ENCODE measurements at regions of chr3 and their contacts with region 1.

Region 1: GRCh38 chr3:100590114-100590839 is 19.1 kb upstream of the ADGRG7 start:
- DNase-seq: peak; percentile 76
- ATAC-seq: peak; percentile 94
- H3K4me3 ChIP-seq: no peak overlapping the region; the same call in 1 of the 2 replicates
- H3K27ac ChIP-seq: no peak overlapping the region
- H3K4me1 ChIP-seq: no peaks in the 10 kb centered on the region
- H3K27me3 ChIP-seq: no peaks in the 10 kb centered on the region
- CTCF ChIP-seq: peak; percentile 89
- POLR2A ChIP-seq: no peak; the same call in 1 of the 2 replicates
- RAD21 ChIP-seq: peak; percentile 93

Region 2: DNA sequence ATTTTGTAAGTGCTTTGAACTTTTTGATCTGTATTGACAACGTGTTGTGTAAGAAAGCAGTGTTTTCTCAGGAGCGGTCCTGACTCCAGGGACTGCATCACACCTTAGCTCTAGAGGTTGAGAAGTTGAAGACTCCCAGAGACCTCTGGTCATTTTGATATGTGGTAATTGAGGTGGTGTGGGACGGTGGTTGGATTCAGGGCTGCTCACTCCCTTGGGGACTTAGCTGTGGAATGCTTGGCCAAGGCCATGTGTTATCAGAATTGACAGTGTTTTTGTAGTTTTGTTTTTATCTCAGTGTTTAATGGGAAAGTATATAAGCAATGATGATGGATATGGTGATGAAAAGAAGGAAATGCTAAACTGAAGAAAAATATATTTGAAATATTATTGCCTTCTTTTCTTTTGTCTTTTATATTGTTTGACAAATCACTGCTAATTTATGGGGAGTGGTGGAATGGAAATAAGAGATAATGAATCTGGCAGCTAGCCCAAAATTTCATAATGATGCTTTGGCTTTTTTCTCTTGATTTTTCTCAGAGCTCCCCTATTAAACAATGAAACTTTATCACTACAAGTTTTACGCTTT is 756.6 kb before region 1 on chr3:
- CTCF ChIA-PET with region 1: no interaction called
- POLR2A ChIA-PET with region 1: no interaction called
- dilution Hi-C with region 1: no loop called
- in situ Hi-C with region 1: loop called (anchors 10 kb)
- intact Hi-C with region 1: loop called (anchors 2 kb)
- DNase-seq: no peak
- ATAC-seq: no peak
- H3K4me3 ChIP-seq: no peak overlapping the region
- H3K27ac ChIP-seq: no peak overlapping the region
- H3K4me1 ChIP-seq: peaks cover 2% of the 10 kb centered on the region; the same call in 1 of the 2 replicates
- H3K27me3 ChIP-seq: no peaks in the 10 kb centered on the region
- CTCF ChIP-seq: no peak
- POLR2A ChIP-seq: no peak
- RAD21 ChIP-seq: no peak

Region 3: GRCh38 chr3:100316641-100317069 is 273.6 kb before region 1 on chr3:
- CTCF ChIA-PET with region 1: no interaction called
- POLR2A ChIA-PET with region 1: no interaction called
- dilution Hi-C with region 1: no loop called
- in situ Hi-C with region 1: loop called (anchors 10 kb)
- intact Hi-C with region 1: loop called (anchors 1 kb)
- DNase-seq: peak; percentile 68
- ATAC-seq: peak; percentile 94
- H3K4me3 ChIP-seq: no peak overlapping the region
- H3K27ac ChIP-seq: peak overlapping the region; percentile 45; the same call in 1 of the 2 replicates
- H3K4me1 ChIP-seq: 0 out of 2 replicates have a peak, but pooled peaks cover 2% of the 10 kb centered on the region
- H3K27me3 ChIP-seq: no peaks in the 10 kb centered on the region
- CTCF ChIP-seq: peak; percentile 70
- POLR2A ChIP-seq: no peak
- RAD21 ChIP-seq: peak; percentile 74

Region 4: GRCh38 chr3:100463002-100463401 is 127.3 kb before region 1 on chr3:
- CTCF ChIA-PET with region 1: interaction called, 23 read pairs
- POLR2A ChIA-PET with region 1: no interaction called
- dilution Hi-C with region 1: no loop called
- in situ Hi-C with region 1: loop called (anchors 5 kb)
- intact Hi-C with region 1: loop called (anchors 1 kb)
- DNase-seq: peak; percentile 78
- ATAC-seq: peak; percentile 94
- H3K4me3 ChIP-seq: no peak overlapping the region
- H3K27ac ChIP-seq: no peak overlapping the region
- H3K4me1 ChIP-seq: no peaks in the 10 kb centered on the region; the same call in 1 of the 2 replicates
- H3K27me3 ChIP-seq: no peaks in the 10 kb centered on the region
- CTCF ChIP-seq: peak; percentile 92
- POLR2A ChIP-seq: 0 out of 2 replicates have a peak, but pooled peaks have one; percentile 27
- RAD21 ChIP-seq: peak; percentile 98

Region 5: DNA sequence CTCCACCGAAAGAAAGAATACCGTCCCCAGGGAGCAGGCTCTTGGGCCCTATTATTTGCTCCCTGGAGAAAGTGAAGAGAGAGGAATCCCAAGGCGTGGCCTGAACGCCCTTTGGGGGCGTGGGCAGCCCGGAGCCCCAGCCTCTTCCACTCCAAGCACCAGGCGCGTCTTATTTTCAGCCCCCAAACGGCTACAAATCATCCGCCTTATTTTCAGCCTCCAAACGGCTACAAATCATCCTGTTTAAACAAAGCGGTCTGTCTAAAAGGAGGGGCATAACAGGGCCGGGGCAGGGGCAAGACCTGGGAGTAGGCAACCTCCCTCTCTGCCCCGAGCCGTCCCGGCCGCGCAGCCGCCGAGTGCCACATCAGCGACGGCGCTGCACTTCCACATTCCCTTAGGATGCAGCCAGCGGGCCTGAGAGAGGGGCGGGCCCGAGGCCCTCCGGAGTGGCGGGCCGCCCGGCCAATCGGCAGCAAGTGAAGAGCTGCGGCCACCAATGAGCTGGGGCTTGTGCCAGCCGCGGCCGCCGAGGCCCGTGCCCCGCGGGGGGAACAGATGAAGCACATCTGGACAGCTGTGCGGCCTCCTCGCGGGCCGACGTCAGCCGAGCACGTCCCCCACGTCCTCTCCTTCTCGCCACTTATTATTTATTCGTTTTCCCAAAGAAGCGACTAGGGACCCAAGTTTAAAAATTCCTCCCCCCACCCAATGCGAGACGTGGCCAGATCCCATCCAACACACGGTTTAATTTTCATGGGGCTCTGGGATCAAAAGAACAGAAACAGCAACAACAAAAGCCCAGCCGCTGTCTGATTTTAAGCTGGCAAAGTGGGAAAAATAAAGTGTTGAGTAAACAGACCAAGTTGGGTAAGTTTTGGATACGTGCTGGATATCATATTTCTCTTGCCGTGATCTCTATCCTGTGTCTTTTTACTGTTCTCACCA is 97.9 kb before region 1 on chr3 and contains the start of gene TMEM45A:
- CTCF ChIA-PET with region 1: interaction called, 5 read pairs
- POLR2A ChIA-PET with region 1: no interaction called
- dilution Hi-C with region 1: no loop called
- in situ Hi-C with region 1: no loop called
- intact Hi-C with region 1: loop called (anchors 1 kb)
- DNase-seq: peak; percentile 95
- ATAC-seq: peak; percentile 99
- H3K4me3 ChIP-seq: peak within 1 kb of the TSS; percentile 79
- H3K27ac ChIP-seq: peak within 1 kb of the TSS; percentile 96
- H3K4me1 ChIP-seq: peaks cover 3% of the 10 kb centered on the region; the same call in 1 of the 2 replicates
- H3K27me3 ChIP-seq: 0 out of 2 replicates have a peak, but pooled peaks cover 2% of the 10 kb centered on the region
- CTCF ChIP-seq: no peak
- POLR2A ChIP-seq: peak; percentile 96
- RAD21 ChIP-seq: no peak
- total RNA-seq, gene TMEM45A: 13.6 and 20.8 TPM in 2 replicates

Region 6: GRCh38 chr3:100796556-100796955 is 206.3 kb after region 1 on chr3:
- CTCF ChIA-PET with region 1: no interaction called
- POLR2A ChIA-PET with region 1: no interaction called
- dilution Hi-C with region 1: no loop called
- in situ Hi-C with region 1: no loop called
- intact Hi-C with region 1: loop called (anchors 10 kb)
- DNase-seq: peak; percentile 47
- ATAC-seq: peak; percentile 52
- H3K4me3 ChIP-seq: no peak overlapping the region
- H3K27ac ChIP-seq: no peak overlapping the region
- H3K4me1 ChIP-seq: no peaks in the 10 kb centered on the region
- H3K27me3 ChIP-seq: no peaks in the 10 kb centered on the region; the same call in 1 of the 2 replicates
- CTCF ChIP-seq: peak; percentile 44
- POLR2A ChIP-seq: no peak
- RAD21 ChIP-seq: peak; percentile 46